Ovary (tissue), 10 donors: ENCODE measurements at regions of chr3 and their contacts with region 1.

Region 1: DNA sequence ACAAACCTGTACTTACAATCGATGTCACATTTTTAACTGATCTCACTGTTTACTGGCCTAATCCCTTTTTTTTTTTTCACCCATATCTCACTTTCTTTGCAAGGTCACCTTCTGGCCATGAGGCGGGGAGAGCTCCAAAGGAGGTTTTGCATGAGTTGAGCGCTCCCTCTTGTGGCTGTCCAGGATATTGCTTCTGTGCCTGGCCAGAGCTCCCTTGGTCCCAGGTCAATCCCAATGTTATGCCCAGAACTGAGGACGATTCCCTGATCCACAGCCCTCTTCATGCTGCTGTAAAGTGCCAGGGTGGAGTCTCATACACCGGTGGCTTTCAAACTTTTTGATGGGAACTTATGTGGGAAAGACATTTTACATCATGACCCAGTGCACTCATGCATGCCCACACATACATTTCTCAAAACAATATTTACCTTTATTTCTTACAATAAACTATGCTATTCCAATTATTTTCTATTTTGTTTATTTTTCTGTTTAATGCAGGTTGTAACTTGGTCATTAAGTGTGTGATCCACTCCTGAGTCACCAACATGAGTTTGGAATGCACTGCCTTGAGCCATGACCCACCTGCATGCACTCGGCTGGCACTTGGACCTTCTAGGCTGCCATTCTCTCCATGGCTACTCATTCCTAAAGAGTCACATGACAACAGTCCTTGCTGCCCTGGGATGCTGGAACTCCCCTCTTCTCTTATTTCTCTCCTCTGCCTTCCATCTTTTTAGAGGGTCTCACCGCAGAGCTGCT is 9.6 kb upstream of the SST start:
- DNase-seq: peak; percentile 64 to 83 (median 80)
- H3K4me3 ChIP-seq: no peak overlapping the region
- H3K27ac ChIP-seq: no peak overlapping the region
- H3K4me1 ChIP-seq: no peaks in the 10 kb centered on the region
- H3K27me3 ChIP-seq: no peaks in the 10 kb centered on the region
- CTCF ChIP-seq: peak; percentile 55 to 73 (median 63)
- EP300 ChIP-seq: no peak
- POLR2A ChIP-seq: no peak

Region 2: GRCh38 chr3:187215460-187215859 is 464.4 kb before region 1 on chr3:
- intact Hi-C with region 1: loop called (anchors 2 to 10 kb)
- DNase-seq: no peak
- H3K4me3 ChIP-seq: no peak overlapping the region
- H3K27ac ChIP-seq: no peak overlapping the region
- H3K4me1 ChIP-seq: peaks cover 3% of the 10 kb centered on the region
- H3K27me3 ChIP-seq: no peaks in the 10 kb centered on the region
- CTCF ChIP-seq: no peak
- EP300 ChIP-seq: no peak
- POLR2A ChIP-seq: no peak

Region 3: DNA sequence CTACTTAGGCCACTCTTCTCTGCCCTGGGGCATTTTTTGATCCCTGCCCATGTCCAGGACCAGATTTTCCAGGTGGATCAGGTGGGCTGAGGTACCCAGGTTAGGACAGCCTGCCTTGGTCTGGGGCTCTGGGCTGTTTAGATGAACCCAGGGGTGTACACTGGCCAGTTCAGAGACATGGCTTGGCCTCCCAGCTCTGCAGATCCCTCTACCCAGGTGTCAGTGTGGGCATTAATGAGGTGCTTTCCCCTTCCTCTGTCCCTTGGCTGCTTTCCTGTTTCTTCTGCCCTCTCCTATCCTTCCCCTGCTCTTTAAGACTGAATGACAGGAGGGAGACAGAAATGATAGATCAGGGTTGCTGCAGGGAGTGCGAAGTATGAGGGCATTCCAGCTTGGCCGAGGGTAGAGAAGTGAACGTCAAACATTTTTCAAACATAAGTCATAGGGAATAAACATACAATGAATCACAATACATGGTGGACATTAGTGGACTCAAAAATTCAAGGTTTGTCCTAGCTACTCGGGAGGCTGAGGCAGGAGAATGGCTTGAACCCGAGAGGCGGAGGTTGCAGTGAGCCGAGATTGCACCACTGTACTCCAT is 452.1 kb before region 1 on chr3:
- intact Hi-C with region 1: loop called in 2 of 4 experiments (anchors 5 to 10 kb)
- DNase-seq: no peak
- H3K4me3 ChIP-seq: no peak overlapping the region
- H3K27ac ChIP-seq: no peak overlapping the region
- H3K4me1 ChIP-seq: no peaks in the 10 kb centered on the region
- H3K27me3 ChIP-seq: no peaks in the 10 kb centered on the region
- CTCF ChIP-seq: no peak
- EP300 ChIP-seq: no peak
- POLR2A ChIP-seq: no peak

Region 4: GRCh38 chr3:187319699-187320302 is 360.0 kb before region 1 on chr3:
- intact Hi-C with region 1: loop called (anchors 2 to 5 kb)
- DNase-seq: peak; percentile 45 to 73 (median 68)
- H3K4me3 ChIP-seq: no peak overlapping the region
- H3K27ac ChIP-seq: no peak overlapping the region
- H3K4me1 ChIP-seq: no peaks in the 10 kb centered on the region
- H3K27me3 ChIP-seq: no peaks in the 10 kb centered on the region
- CTCF ChIP-seq: peak; percentile 31 to 49 (median 46)
- EP300 ChIP-seq: no peak
- POLR2A ChIP-seq: no peak

Region 5: DNA sequence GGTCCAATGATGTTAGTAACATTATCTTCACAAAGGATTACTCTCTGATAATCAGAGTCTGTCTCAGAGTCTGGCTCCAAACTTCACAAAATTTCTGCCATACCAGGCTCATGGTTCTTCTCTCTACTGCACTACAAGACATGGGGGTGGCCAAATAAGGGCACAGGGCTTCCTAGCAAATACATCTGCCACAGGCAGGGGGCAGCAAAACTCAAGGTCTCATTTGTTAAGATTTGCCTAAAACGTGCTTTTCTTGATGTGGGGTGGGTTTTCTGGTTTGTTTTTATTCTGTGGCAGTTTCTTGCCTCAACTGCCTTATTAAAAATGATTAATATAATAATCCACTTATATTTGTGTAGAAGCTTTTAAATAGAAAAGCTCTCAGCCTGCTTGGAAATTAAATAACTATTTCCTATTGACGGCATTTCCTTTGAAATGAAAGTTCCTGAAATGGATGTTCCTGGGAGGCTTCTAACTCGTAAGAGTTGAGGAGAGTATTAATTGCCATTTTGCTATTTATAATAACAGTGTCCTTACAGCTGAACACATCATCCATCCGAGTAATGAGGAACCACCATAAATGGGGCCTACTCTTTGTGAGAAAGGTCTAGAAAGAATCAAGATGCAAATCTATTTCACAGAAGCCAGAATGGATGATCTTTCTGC is 63.4 kb before region 1 on chr3:
- intact Hi-C with region 1: loop called in 1 of 4 experiments (anchors 10 kb)
- DNase-seq: peak in 2 of 5 donors; percentile 29 to 57
- H3K4me3 ChIP-seq: no peak overlapping the region
- H3K27ac ChIP-seq: no peak overlapping the region
- H3K4me1 ChIP-seq: peaks cover 5% of the 10 kb centered on the region
- H3K27me3 ChIP-seq: no peaks in the 10 kb centered on the region
- CTCF ChIP-seq: no peak
- EP300 ChIP-seq: no peak
- POLR2A ChIP-seq: no peak